AG04449 (cell line): ENCODE measurements at regions of chr4 and their contacts with region 1.

Region 1: GRCh38 chr4:68175562-68176155 is 46.0 kb upstream of the TMPRSS11F start:
- DNase-seq: peak; percentile 3
- H3K4me3 ChIP-seq: no peak overlapping the region
- CTCF ChIP-seq: peak; percentile 46

Region 2: GRCh38 chr4:67871867-67872266 is 303.8 kb before region 1 on chr4:
- CTCF ChIA-PET with region 1: interaction called, 19 read pairs
- POLR2A ChIA-PET with region 1: no interaction called
- DNase-seq: no peak
- H3K4me3 ChIP-seq: no peak overlapping the region
- CTCF ChIP-seq: peak; percentile 50

Region 3: DNA sequence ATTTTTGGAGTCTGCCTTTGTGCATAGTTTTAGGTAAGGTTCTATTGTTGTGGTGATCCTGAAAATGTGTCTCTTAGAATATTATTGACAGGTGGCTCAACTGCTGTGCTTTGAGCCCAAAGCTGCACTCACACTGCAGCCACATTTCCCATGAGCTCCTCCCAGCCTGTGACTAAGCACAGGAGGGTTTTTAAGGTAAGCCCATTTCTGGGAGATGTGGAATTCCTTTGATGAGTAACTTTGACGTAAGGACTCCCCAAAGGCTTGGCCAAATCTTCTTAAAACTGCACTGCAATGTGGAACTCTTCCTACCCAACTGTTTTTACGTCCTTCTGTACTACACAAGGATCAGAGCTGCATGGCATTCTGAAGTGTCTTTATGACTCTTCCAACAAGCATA is 192.3 kb before region 1 on chr4:
- CTCF ChIA-PET with region 1: interaction called, 10 read pairs
- POLR2A ChIA-PET with region 1: no interaction called
- DNase-seq: no peak
- H3K4me3 ChIP-seq: no peak overlapping the region
- CTCF ChIP-seq: no peak

Region 4: GRCh38 chr4:68062501-68062900 is 113.2 kb before region 1 on chr4:
- CTCF ChIA-PET with region 1: no interaction called
- POLR2A ChIA-PET with region 1: no interaction called
- DNase-seq: no peak
- H3K4me3 ChIP-seq: no peak overlapping the region
- CTCF ChIP-seq: no peak